ENCODE measurements at regions of chr6 and their contacts with region 1.

Region 1: DNA sequence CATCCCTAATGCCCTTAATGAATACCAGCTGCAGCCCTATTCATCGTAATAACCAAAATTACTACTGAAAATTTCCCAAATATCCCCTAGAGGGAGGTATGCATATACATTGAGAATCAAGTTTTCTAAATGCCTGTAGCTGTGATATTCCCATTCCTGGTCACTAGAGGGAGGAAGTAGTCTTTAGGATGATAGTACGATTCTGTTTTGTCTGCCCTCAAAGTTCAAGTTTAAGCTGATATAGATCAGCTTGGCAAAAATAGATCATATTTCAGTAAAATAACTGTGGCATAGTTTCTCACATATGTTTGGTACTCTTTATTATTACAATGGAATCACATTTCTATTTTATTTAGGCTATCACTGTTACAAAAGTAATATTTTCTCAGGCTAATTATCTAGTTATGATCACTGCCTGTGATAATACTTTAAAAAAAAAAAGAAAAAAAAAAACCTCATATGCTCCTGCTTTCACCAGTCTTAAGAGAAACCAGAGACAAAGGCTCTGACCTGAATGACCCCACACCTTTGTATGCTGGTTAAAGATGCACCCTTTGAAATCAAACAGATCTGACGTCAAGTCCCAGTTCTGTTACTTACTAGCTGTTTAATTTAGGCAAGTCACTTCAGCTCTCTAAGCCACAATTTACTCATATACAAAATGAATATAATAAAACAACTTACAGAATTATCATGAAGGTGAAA is 11.0 kb downstream of the TSPYL1 start:
- DNase-seq: peak in 4 of 5 donors; percentile 44 to 50 (median 46)
- H3K4me3 ChIP-seq: no peak overlapping the region
- H3K4me3 Mint-ChIP-seq: no peak overlapping the region
- H3K27ac ChIP-seq: no peak overlapping the region
- H3K27ac Mint-ChIP-seq: peak overlapping the region; percentile 4 to 82 (median 65)
- H3K4me1 ChIP-seq: peaks cover 25% of the 10 kb centered on the region
- H3K4me1 Mint-ChIP-seq: peaks cover 16 to 29% (median 24%) of the 10 kb centered on the region in 4 donors
- H3K27me3 ChIP-seq: no peaks in the 10 kb centered on the region
- H3K27me3 Mint-ChIP-seq: no peaks in the 10 kb centered on the region

Region 2: GRCh38 chr6:116253505-116254296 is 15.0 kb before region 1 on chr6 and contains the start of gene TSPYL4:
- CTCF ChIA-PET with region 1: interaction called, 28 read pairs
- POLR2A ChIA-PET with region 1: interaction called, 6 read pairs
- intact Hi-C with region 1: no loop called
- DNase-seq: peak; percentile 91 to 96 (median 93)
- H3K4me3 ChIP-seq: peak within 1 kb of the TSS; percentile 66 to 96
- H3K4me3 Mint-ChIP-seq: no peak within 1 kb of the TSS
- H3K27ac ChIP-seq: peak within 1 kb of the TSS; percentile 97
- H3K27ac Mint-ChIP-seq: peak within 1 kb of the TSS in 1 of 7 donors; percentile 69
- H3K4me1 ChIP-seq: peaks cover 45% of the 10 kb centered on the region
- H3K4me1 Mint-ChIP-seq: peaks cover 3 to 32% (median 18%) of the 10 kb centered on the region in 4 donors
- H3K27me3 ChIP-seq: no peaks in the 10 kb centered on the region
- H3K27me3 Mint-ChIP-seq: no peaks in the 10 kb centered on the region
- total RNA-seq, gene TSPYL4: 22.3 to 23.0 TPM

Measured in CD4-positive, alpha-beta memory T cell (primary cell).